T-cell (primary cell): ENCODE measurements at regions of chr2 and their contacts with region 1.

Region 1: DNA sequence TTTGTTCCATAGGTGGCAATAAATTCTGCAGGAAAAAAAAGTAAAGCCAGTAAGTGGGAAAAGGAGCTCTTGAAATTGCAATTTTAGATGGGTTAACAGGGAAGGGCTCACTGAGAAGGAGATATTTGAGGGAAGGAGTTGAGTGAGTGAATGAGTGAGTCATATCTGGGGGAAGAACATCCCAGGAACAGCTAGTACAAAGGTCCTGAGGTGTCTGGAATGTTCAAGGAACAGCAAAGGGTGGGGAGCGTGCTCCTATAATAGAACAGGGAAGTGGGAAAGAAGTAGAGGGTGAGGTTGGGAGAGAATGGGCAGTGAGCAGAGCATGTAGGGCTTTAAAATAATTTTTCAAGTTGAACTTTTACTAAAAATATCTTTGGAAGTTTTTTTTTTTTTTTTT is 68.0 kb upstream of the PSME4 start:
- DNase-seq: no peak
- ATAC-seq: no peak
- H3K4me3 ChIP-seq: no peak overlapping the region
- H3K4me3 Mint-ChIP-seq: no peak overlapping the region
- H3K27ac ChIP-seq: no peak overlapping the region
- H3K27ac Mint-ChIP-seq: no peak overlapping the region
- H3K4me1 ChIP-seq: peaks cover 0 to 4% of the 10 kb centered on the region in 2 experiments
- H3K4me1 Mint-ChIP-seq: no peaks in the 10 kb centered on the region
- H3K27me3 ChIP-seq: no peaks in the 10 kb centered on the region
- H3K27me3 Mint-ChIP-seq: no peaks in the 10 kb centered on the region

Region 2: DNA sequence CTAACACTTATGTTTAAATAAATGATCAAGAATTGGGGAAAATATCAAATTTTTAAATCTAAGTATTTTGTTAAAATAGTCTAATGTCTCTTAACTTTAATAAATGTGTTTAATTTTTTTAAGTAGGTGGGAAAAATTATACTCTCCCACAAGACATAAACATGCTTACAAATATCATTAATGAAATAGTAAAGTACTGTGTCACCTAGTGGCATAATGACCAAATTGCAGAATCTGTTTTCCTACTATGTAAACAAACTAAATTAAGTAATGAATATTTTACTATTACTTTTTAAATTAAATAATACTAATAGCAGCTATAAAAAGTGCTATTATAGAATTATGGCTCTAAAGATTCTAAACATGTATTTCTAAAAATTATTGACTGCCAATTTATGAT is 323.3 kb before region 1 on chr2:
- CTCF ChIA-PET with region 1: interaction called in 1 of 2 experiments, 11 read pairs
- POLR2A ChIA-PET with region 1: no interaction called
- DNase-seq: no peak
- ATAC-seq: no peak
- H3K4me3 ChIP-seq: no peak overlapping the region
- H3K4me3 Mint-ChIP-seq: no peak overlapping the region
- H3K27ac ChIP-seq: no peak overlapping the region
- H3K27ac Mint-ChIP-seq: no peak overlapping the region
- H3K4me1 ChIP-seq: no peaks in the 10 kb centered on the region
- H3K4me1 Mint-ChIP-seq: peaks cover 7 to 8% (median 7%) of the 10 kb centered on the region in 3 donors
- H3K27me3 ChIP-seq: no peaks in the 10 kb centered on the region
- H3K27me3 Mint-ChIP-seq: no peaks in the 10 kb centered on the region

Region 3: GRCh38 chr2:53985646-53986045 is 53.2 kb before region 1 on chr2:
- CTCF ChIA-PET with region 1: interaction called in 1 of 2 experiments, 6 read pairs
- POLR2A ChIA-PET with region 1: interaction called, 6 to 10 read pairs
- DNase-seq: no peak
- ATAC-seq: no peak
- H3K4me3 ChIP-seq: no peak overlapping the region
- H3K4me3 Mint-ChIP-seq: no peak overlapping the region
- H3K27ac ChIP-seq: no peak overlapping the region
- H3K27ac Mint-ChIP-seq: peak overlapping the region in 1 of 2 donors; percentile 2
- H3K4me1 ChIP-seq: peaks cover 0 to 4% of the 10 kb centered on the region in 2 experiments
- H3K4me1 Mint-ChIP-seq: peaks cover 21 to 25% (median 22%) of the 10 kb centered on the region in 3 donors
- H3K27me3 ChIP-seq: no peaks in the 10 kb centered on the region
- H3K27me3 Mint-ChIP-seq: no peaks in the 10 kb centered on the region